PC-9 (cell line): ENCODE measurements at regions of chr3 and their contacts with region 1.

Region 1: GRCh38 chr3:118597184-118597583 is 437.5 kb downstream of the IGSF11 start:
- DNase-seq: no peak
- H3K4me3 ChIP-seq: no peak overlapping the region
- H3K27ac ChIP-seq: no peak overlapping the region
- H3K4me1 ChIP-seq: no peaks in the 10 kb centered on the region
- H3K27me3 ChIP-seq: no peaks in the 10 kb centered on the region
- CTCF ChIP-seq: no peak

Region 2: DNA sequence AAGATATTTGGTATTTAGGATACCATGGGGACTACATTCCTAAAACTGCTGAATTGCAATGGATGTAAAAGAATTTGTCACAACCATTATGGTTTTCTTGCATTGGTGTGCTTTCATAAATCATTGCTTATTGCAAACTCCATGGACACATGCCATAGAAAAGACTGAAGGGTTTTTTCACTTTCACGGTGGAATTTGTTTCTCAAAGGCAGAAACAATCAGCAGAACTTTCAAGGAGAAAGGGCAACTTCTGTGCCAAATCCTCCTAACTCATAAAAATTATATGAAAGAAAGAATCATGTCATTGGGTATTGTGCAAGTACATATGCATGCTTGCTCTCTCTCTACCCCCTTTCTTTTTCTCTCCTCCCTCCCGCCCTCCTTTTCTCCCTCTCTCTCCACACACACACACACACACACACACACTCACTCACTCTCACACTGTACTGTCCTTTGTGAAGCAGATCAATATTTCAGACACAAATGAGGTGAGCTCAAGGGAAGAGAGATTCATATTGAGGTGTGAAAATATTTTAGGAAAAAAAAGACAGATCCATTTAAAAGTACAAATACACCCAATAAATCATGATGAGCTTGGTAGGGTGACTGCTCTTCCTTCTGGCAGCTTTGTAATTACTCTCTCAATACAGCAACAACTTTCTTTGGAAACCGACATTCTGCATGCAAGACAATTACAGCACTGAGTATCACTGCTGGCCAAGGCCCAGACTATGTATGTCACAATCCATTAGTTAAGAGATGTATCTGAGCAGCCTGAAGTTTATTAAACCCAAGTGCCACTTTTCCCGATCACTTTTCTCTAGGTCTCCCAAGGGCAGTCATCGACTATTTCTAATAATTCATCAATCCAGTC is 1395.0 kb before region 1 on chr3:
- CTCF ChIA-PET with region 1: interaction called, 12 read pairs
- POLR2A ChIA-PET with region 1: no interaction called
- intact Hi-C with region 1: no loop called
- DNase-seq: no peak
- H3K4me3 ChIP-seq: no peak overlapping the region
- H3K27ac ChIP-seq: no peak overlapping the region
- H3K4me1 ChIP-seq: no peaks in the 10 kb centered on the region
- H3K27me3 ChIP-seq: no peaks in the 10 kb centered on the region
- CTCF ChIP-seq: no peak

Region 3: DNA sequence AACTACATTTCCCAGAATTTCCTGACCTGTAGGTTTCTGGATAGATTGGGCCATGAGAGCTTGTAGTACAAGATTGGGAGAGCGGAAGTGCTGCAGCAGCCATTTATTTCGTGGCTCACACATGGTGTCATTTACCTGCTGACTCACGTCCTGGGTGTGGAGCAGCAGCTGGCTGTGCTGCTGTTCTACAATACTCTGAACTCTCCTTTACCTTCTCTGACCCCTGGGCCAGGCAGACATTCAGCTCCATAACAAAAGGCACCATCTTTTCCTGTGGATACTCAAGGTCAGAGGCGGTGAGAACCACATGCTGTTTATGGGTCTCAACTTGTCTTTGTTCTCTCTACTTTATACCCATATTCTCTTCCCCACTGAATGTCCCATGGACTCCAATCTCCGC is 52.7 kb before region 1 on chr3:
- CTCF ChIA-PET with region 1: no interaction called
- POLR2A ChIA-PET with region 1: no interaction called
- intact Hi-C with region 1: no loop called
- DNase-seq: peak in 1 of 2 experiments; percentile 47
- H3K4me3 ChIP-seq: no peak overlapping the region
- H3K27ac ChIP-seq: no peak overlapping the region
- H3K4me1 ChIP-seq: peaks cover 7% of the 10 kb centered on the region
- H3K27me3 ChIP-seq: no peaks in the 10 kb centered on the region
- CTCF ChIP-seq: no peak

Region 4: GRCh38 chr3:118557513-118558257 is 39.5 kb before region 1 on chr3:
- CTCF ChIA-PET with region 1: no interaction called
- POLR2A ChIA-PET with region 1: no interaction called
- intact Hi-C with region 1: no loop called
- DNase-seq: no peak
- H3K4me3 ChIP-seq: no peak overlapping the region
- H3K27ac ChIP-seq: no peak overlapping the region
- H3K4me1 ChIP-seq: no peaks in the 10 kb centered on the region
- H3K27me3 ChIP-seq: no peaks in the 10 kb centered on the region
- CTCF ChIP-seq: no peak

Region 5: DNA sequence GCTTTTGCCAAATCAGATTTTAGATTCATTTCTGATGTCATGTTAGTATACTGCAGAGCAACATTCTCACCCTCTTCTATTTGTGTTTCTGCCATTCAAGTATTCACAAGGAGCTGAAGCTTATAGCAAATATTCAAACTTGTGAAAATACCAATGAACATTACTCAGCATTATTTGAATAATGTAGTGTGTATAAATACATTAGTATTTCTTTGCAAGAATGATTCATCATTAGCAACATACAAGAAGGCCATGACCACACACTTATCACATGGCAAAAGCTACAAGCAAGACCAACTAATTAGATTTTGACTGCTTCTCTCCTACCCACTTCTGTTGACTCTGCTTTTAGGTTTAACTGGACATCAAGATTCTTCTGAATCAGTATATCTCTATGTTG is 312.6 kb after region 1 on chr3:
- CTCF ChIA-PET with region 1: no interaction called
- POLR2A ChIA-PET with region 1: no interaction called
- intact Hi-C with region 1: no loop called
- DNase-seq: no peak
- H3K4me3 ChIP-seq: no peak overlapping the region
- H3K27ac ChIP-seq: no peak overlapping the region
- H3K4me1 ChIP-seq: no peaks in the 10 kb centered on the region
- H3K27me3 ChIP-seq: no peaks in the 10 kb centered on the region
- CTCF ChIP-seq: no peak